ENCODE measurements at regions of chr17 and their contacts with region 1.

Region 1: GRCh38 chr17:56834380-56835268 is 673 bp downstream of the DGKE start:
- DNase-seq: peak; percentile 45 to 81 (median 62)
- ATAC-seq: peak; percentile 24 to 39 (median 34)
- H3K4me3 ChIP-seq: peak overlapping the region; percentile 79 to 94
- H3K4me3 Mint-ChIP-seq: peak overlapping the region; percentile 76 to 97 (median 96)
- H3K27ac ChIP-seq: peak overlapping the region; percentile 58
- H3K27ac Mint-ChIP-seq: peak overlapping the region; percentile 91 to 94
- H3K4me1 ChIP-seq: peaks cover 15 to 28% of the 10 kb centered on the region in 2 experiments
- H3K4me1 Mint-ChIP-seq: peaks cover 66 to 72% (median 70%) of the 10 kb centered on the region in 3 donors
- H3K27me3 ChIP-seq: no peaks in the 10 kb centered on the region
- H3K27me3 Mint-ChIP-seq: no peaks in the 10 kb centered on the region

Region 2: GRCh38 chr17:56863974-56864373 is 29.4 kb after region 1 on chr17:
- CTCF ChIA-PET with region 1: no interaction called
- POLR2A ChIA-PET with region 1: no interaction called
- DNase-seq: no peak
- ATAC-seq: no peak
- H3K4me3 ChIP-seq: no peak overlapping the region
- H3K4me3 Mint-ChIP-seq: no peak overlapping the region
- H3K27ac ChIP-seq: no peak overlapping the region
- H3K27ac Mint-ChIP-seq: peak overlapping the region in 1 of 2 donors; percentile 28
- H3K4me1 ChIP-seq: no peaks in the 10 kb centered on the region
- H3K4me1 Mint-ChIP-seq: no peaks in the 10 kb centered on the region
- H3K27me3 ChIP-seq: no peaks in the 10 kb centered on the region
- H3K27me3 Mint-ChIP-seq: no peaks in the 10 kb centered on the region

Region 3: DNA sequence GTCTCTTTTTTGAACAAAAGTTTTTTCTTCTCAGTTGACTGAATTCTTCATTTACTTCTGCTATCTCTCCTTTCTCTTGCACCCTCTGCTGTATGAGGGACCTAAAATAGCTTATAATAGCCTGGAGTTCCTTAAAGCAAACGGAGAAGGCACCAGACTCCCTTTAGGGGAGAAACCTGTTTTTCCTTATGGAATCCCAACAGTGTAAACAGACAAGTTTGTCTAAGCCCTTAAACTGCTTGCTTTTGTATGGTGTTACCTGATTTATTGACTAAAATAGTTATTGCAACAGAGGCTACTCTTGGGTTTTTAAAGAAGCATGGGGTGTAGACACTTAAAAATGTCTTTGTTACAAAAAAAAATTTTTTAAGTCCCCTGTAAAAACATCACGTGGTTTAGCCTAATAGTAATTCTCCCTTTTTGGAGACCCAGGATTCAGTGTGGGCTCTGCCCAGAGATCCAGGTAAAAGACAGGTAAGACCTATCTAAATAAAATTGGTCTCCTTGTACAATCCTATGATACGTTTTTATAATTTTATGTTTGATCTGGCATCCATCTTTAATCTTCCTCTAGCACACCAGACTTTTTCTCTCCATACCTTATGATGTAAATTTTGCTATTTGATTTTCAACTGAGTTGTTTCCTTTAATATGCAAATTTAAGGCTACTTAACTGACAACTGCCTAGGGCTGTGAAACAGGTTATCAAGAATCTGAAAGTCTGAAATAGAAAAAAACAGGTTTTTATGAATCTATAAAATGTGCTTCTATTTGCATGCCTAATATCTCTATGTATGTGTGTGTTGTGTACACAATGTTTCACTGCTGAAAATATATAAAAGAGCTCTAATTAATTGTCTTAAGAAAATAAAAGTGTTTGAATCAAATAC is 92.3 kb after region 1 on chr17:
- CTCF ChIA-PET with region 1: no interaction called
- POLR2A ChIA-PET with region 1: interaction called in 1 of 2 experiments, 10 read pairs
- DNase-seq: no peak
- ATAC-seq: no peak
- H3K4me3 ChIP-seq: no peak overlapping the region
- H3K4me3 Mint-ChIP-seq: no peak overlapping the region
- H3K27ac ChIP-seq: no peak overlapping the region
- H3K27ac Mint-ChIP-seq: no peak overlapping the region
- H3K4me1 ChIP-seq: no peaks in the 10 kb centered on the region
- H3K4me1 Mint-ChIP-seq: no peaks in the 10 kb centered on the region
- H3K27me3 ChIP-seq: no peaks in the 10 kb centered on the region
- H3K27me3 Mint-ChIP-seq: no peaks in the 10 kb centered on the region

Region 4: DNA sequence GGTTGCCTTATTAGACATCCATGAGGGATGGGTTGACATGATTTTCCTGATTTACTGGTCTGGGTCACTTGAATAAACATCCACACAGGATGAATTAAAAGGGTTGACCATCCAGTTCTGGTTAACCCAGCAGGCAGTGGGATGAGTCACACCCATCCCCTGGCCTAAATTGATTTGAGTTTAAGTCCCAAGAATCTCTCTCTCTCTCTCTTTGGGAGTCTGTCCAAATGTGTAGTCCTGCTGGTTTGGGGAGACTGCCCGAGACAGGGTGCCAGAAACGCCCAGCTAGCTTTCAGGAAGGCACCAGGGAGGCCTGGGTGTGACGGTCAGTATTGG is 182.1 kb after region 1 on chr17:
- CTCF ChIA-PET with region 1: no interaction called
- POLR2A ChIA-PET with region 1: no interaction called
- DNase-seq: no peak
- ATAC-seq: no peak
- H3K4me3 ChIP-seq: no peak overlapping the region
- H3K4me3 Mint-ChIP-seq: no peak overlapping the region
- H3K27ac ChIP-seq: no peak overlapping the region
- H3K27ac Mint-ChIP-seq: no peak overlapping the region
- H3K4me1 ChIP-seq: no peaks in the 10 kb centered on the region
- H3K4me1 Mint-ChIP-seq: no peaks in the 10 kb centered on the region
- H3K27me3 ChIP-seq: peaks cover 0 to 11% of the 10 kb centered on the region in 2 experiments
- H3K27me3 Mint-ChIP-seq: peaks cover 8 to 19% of the 10 kb centered on the region in 2 donors

Region 5: GRCh38 chr17:57045868-57046704 is 211.5 kb after region 1 on chr17:
- CTCF ChIA-PET with region 1: no interaction called
- POLR2A ChIA-PET with region 1: no interaction called
- DNase-seq: peak in 25 of 35 experiments; percentile 1 to 24 (median 6)
- ATAC-seq: peak; percentile 65 to 72 (median 68)
- H3K4me3 ChIP-seq: peak overlapping the region; percentile 18 to 53
- H3K4me3 Mint-ChIP-seq: peak overlapping the region; percentile 68 to 79 (median 77)
- H3K27ac ChIP-seq: no peak overlapping the region
- H3K27ac Mint-ChIP-seq: peak overlapping the region in 1 of 2 donors; percentile 19
- H3K4me1 ChIP-seq: peaks cover 0 to 17% of the 10 kb centered on the region in 2 experiments
- H3K4me1 Mint-ChIP-seq: peaks cover 7 to 23% (median 18%) of the 10 kb centered on the region in 3 donors
- H3K27me3 ChIP-seq: peaks cover 5 to 68% of the 10 kb centered on the region in 2 experiments
- H3K27me3 Mint-ChIP-seq: peaks cover 40 to 51% of the 10 kb centered on the region in 2 donors